ENCODE measurements at regions of chr19 and their contacts with region 1.

Region 1: GRCh38 chr19:48108997-48109782 is 1.4 kb downstream of the PLA2G4C start:
- DNase-seq: no peak
- ATAC-seq: no peak
- H3K4me3 ChIP-seq: peak overlapping the region in 1 of 4 donors; percentile 52
- H3K27ac ChIP-seq: no peak overlapping the region
- H3K4me1 ChIP-seq: peaks cover 0 to 17% (median 5%) of the 10 kb centered on the region in 3 donors
- H3K27me3 ChIP-seq: no peaks in the 10 kb centered on the region
- CTCF ChIP-seq: no peak

Region 2: GRCh38 chr19:48123907-48124651 is 14.9 kb after region 1 on chr19:
- intact Hi-C with region 1: no loop called
- DNase-seq: no peak
- ATAC-seq: no peak
- H3K4me3 ChIP-seq: no peak overlapping the region
- H3K27ac ChIP-seq: no peak overlapping the region
- H3K4me1 ChIP-seq: no peaks in the 10 kb centered on the region
- H3K27me3 ChIP-seq: no peaks in the 10 kb centered on the region
- CTCF ChIP-seq: no peak

Region 3: DNA sequence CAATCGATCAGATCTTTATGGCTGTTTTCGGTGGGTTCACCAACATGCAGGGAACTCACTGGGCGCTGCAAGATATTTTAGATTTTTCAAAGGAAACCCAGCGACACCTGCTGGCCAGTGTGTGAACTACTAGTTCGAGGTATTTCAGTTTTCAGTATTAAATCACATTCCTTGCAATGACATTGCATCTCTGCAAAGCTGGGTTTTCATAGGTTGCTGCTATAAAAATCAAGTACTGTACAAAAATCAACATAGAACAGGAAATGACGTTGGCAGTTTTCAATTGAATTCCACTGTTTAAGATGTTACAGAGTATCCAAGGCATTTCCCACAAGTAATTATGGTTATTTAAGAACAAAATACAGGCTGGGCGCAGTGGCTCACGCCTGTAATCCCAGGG is 43.4 kb after region 1 on chr19:
- intact Hi-C with region 1: loop called in 1 of 3 experiments (anchors 5 kb)
- DNase-seq: peak in 5 of 6 donors; percentile 24 to 83 (median 52)
- ATAC-seq: peak in 3 of 4 donors; percentile 76 to 84 (median 83)
- H3K4me3 ChIP-seq: no peak overlapping the region
- H3K27ac ChIP-seq: no peak overlapping the region
- H3K4me1 ChIP-seq: no peaks in the 10 kb centered on the region
- H3K27me3 ChIP-seq: no peaks in the 10 kb centered on the region
- CTCF ChIP-seq: peak; percentile 67 to 87 (median 73)